GM18951 (cell line): ENCODE measurements at regions of chr12 and their contacts with region 1.

Region 1: GRCh38 chr12:93569656-93570551 is 2.6 kb upstream of the SOCS2 start:
- POLR2A ChIP-seq: no peak

Region 2: GRCh38 chr12:93050026-93050747 is 519.7 kb before region 1 on chr12:
- in situ Hi-C with region 1: no loop called
- POLR2A ChIP-seq: no peak

Region 3: DNA sequence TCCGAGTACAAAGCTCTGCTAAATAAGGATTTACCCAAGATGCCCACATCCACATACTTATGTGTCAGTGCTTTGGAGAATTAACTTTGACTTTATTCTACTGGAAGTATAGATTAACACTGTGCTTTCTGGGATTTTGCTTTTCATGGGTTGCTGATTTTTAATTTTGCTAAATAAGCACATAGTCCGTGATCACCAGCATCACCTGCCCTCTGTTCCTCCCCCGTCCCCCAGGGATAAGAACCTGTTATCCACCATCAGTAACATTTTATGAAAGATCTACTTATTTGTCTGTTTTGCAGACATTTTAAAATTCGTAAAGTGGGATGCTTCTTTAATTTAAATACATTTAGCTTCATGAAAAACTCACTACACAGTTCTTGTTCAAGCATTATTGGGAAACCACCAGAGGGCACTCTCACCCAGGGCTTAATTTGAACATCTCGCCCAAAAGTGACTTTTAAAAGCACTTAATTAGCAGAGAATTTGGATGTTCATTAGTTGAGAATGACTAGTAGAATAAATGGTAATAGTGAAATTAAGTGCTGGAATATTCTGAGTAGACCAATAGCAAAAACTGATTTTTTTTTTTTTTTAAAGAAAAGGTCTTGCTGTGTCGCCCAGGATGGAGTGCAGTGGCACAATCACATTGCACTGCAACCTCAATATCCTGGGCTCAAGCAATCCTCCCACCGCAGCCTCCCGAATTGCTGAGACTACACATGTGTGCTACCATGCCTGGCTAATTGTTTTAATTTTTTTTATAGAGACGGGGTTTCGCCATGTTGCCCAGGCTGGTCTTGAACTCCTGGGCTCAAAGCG is 66.9 kb before region 1 on chr12:
- in situ Hi-C with region 1: no loop called
- POLR2A ChIP-seq: no peak

Region 4: DNA sequence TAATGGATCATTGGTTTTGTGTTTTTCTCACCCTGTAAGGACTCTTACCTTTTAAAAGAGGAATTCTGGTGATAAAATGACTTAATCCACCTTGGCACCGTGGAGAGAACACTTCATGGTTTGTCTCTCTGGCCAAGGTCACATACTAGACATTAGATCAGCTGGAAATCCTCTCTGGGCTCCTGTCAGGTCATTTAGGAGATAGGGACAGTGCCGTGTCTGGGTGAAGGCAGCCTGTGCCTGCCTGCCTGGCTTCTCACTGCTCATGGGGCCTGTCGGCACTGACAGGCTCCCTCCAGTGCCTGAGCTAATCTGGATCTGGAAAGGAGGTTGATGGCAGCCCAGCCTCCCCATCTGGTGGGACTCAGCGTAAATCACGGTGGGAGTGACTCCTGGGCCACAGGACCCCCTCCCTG is 113.0 kb after region 1 on chr12:
- in situ Hi-C with region 1: no loop called
- POLR2A ChIP-seq: no peak

Region 5: GRCh38 chr12:93707836-93708235 is 137.9 kb after region 1 on chr12:
- in situ Hi-C with region 1: no loop called
- POLR2A ChIP-seq: no peak

Region 6: DNA sequence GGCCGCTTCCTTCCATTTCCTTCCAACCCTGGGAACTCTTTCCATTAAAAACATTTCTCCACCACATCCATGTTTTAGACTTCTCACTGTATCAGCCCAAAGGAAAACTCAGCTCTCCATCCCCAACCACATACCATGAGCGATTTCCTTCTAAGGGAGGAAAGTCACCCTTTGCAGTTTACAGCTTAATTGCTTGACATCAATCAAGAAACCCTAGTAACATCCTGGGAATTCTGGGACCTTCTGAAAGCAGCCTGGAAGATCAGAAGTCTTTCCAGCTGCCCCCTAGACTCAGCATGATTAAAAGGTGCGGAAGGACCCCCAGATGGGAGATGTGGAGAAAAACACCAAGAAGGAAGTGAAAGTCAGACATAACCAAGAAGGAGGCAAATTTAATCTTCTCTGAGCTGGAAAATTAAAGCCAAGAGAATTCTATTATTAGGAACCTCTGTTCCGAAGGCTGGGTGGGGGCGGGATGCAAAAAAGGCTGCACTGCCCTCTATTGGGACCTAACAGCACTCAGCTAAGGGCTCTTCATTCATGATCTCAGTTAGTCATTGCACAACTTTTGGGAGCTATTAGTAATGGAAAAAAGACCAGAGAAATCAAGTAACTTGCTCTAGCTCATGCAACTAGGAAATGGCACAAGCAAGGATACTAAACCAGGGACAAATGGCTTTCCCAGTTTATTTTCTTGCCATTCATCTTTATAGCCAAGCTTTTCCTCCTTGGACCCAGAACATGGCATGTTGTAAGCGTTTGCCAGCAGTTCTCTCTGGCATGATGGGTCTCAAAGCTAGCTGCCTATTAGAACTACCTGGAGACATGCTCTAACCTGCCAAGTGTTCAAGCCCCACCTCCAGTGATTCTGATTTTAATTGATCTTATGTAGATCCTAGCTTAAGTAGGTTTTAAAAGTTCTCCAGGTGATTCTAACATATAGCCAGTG is 505.4 kb after region 1 on chr12:
- in situ Hi-C with region 1: loop called (anchors 25 kb)
- POLR2A ChIP-seq: no peak